Activated naive CD4-positive, alpha-beta T cell treated with anti-CD3 and anti-CD28 coated beads, Interleukin-2, amount 10 ng/mL, durations not matched to agents 7 days and 5 days (primary cell): ENCODE measurements at regions of chr1 and their contacts with region 1.

Region 1: GRCh38 chr1:64268653-64269557 is 65.5 kb downstream of the UBE2U start:
- DNase-seq: peak; percentile 77
- H3K4me3 Mint-ChIP-seq: no peak overlapping the region
- H3K27ac Mint-ChIP-seq: no peak overlapping the region
- H3K4me1 Mint-ChIP-seq: no peaks in the 10 kb centered on the region
- H3K27me3 Mint-ChIP-seq: peaks cover 6% of the 10 kb centered on the region

Region 2: DNA sequence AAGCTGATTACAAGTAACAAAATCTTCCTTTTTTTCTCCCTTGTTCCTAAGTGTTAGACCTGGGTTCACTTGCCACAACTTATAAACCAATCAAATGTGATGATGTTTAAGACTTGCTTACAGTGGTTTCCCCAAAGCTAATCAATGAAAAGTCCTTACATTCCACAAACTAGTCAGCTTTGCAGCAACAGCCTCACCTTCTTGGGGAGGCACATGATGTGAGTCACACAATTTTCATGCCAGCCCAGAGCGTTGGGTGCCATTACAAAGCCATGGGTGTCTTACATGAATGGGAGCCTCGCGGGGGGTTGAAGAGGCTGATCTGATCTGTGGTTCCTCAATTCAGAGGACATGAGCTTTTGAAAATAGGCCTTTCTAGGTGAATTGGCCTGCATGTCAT is 157.1 kb before region 1 on chr1:
- CTCF ChIA-PET with region 1: no interaction called
- DNase-seq: no peak
- H3K4me3 Mint-ChIP-seq: no peak overlapping the region
- H3K27ac Mint-ChIP-seq: no peak overlapping the region
- H3K4me1 Mint-ChIP-seq: no peaks in the 10 kb centered on the region
- H3K27me3 Mint-ChIP-seq: peaks cover 2% of the 10 kb centered on the region

Region 3: GRCh38 chr1:64823691-64824476 is 555.0 kb after region 1 on chr1:
- CTCF ChIA-PET with region 1: interaction called, 14 read pairs
- DNase-seq: peak; percentile 75
- H3K4me3 Mint-ChIP-seq: no peak overlapping the region
- H3K27ac Mint-ChIP-seq: no peak overlapping the region
- H3K4me1 Mint-ChIP-seq: peaks cover 26% of the 10 kb centered on the region
- H3K27me3 Mint-ChIP-seq: no peaks in the 10 kb centered on the region